A549 (cell line): ENCODE measurements at regions of chr2 and their contacts with region 1.

Region 1: DNA sequence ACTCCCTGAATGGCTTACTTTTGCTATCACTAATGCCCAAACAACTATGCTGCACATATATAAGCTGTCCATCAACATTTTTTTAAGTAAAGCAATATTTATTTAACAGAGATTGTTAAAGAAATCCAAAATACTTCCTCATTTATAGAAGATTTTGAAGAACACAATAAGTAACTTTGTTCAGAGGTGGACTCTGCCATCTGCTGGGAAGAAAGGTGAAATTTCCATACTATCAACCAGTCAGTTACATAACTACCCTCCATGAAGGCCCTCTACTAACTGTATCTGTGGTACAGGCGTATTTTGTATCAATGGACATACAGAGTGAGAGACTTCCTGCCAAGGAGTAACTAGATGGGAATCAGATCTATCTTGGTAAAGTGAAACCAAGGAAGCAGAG is 106.0 kb downstream of the DTNB start:
- DNase-seq: peak; percentile 40 to 59
- ATAC-seq: peak; percentile 84 to 89; a peak in 5 of 6 replicates
- H3K4me3 ChIP-seq: no peak overlapping the region
- H3K27ac ChIP-seq: no peak overlapping the region
- H3K4me1 ChIP-seq: no peaks in the 10 kb centered on the region
- CTCF ChIP-seq: peak; percentile 82
- EP300 ChIP-seq: no peak
- POLR2A ChIP-seq: no peak
- RAD21 ChIP-seq: peak; percentile 70 to 76

Region 2: DNA sequence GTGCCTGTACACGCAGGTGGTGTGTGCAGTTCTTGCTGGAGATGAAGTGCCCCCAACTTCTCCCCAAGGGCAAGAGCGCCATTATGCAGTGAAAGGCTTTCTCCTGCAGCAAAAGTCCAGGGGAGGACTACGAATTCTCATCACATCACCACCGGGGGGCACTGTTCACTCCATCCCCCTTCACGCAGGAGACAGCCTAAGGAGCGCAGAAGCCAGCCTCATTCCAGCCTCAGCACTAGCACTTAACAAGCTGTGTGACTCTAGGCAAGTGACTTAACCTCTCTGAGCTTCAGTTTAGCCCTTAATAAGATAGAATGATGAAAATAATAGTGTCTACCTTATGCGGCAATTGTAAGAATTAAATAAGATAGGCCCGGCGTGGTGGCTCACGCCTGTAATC is 258.0 kb before region 1 on chr2:
- CTCF ChIA-PET with region 1: interaction called, 16 read pairs
- POLR2A ChIA-PET with region 1: no interaction called
- DNase-seq: peak; percentile 73 to 78
- ATAC-seq: peak; percentile 65 to 88; a peak in 5 of 6 replicates
- H3K4me3 ChIP-seq: no peak overlapping the region
- H3K27ac ChIP-seq: no peak overlapping the region
- H3K4me1 ChIP-seq: no peaks in the 10 kb centered on the region
- CTCF ChIP-seq: peak; percentile 65
- EP300 ChIP-seq: no peak
- POLR2A ChIP-seq: no peak
- RAD21 ChIP-seq: peak; percentile 56 to 69

Region 3: DNA sequence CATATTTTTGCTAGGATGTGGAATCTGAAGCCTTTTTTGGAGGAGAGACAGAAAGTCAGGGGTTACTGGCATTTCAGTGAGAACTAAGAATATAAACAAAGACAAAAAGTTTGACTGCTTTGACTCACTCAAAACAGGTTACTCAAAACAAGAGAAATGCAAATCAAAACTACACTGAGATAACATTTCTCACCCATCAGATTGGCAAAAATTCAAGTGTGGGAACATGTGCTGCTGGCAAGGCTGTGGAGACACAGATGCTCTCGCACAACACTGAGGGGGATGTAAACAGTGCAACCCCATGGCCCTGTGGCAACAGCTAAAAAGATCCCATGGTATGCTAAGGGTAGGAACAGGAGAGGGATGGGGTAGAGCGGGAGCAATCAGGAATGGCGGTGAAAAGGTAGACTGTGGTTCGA is 19.3 kb after region 1 on chr2:
- CTCF ChIA-PET with region 1: interaction called, 12 read pairs
- POLR2A ChIA-PET with region 1: no interaction called
- DNase-seq: no peak
- ATAC-seq: peak; percentile 44; a peak in 3 of 6 replicates
- H3K4me3 ChIP-seq: no peak overlapping the region
- H3K27ac ChIP-seq: no peak overlapping the region
- H3K4me1 ChIP-seq: peaks cover 11% of the 10 kb centered on the region
- CTCF ChIP-seq: no peak
- EP300 ChIP-seq: no peak
- POLR2A ChIP-seq: no peak
- RAD21 ChIP-seq: no peak